A549 (cell line): ENCODE measurements at regions of chr18 and their contacts with region 1.

Region 1: DNA sequence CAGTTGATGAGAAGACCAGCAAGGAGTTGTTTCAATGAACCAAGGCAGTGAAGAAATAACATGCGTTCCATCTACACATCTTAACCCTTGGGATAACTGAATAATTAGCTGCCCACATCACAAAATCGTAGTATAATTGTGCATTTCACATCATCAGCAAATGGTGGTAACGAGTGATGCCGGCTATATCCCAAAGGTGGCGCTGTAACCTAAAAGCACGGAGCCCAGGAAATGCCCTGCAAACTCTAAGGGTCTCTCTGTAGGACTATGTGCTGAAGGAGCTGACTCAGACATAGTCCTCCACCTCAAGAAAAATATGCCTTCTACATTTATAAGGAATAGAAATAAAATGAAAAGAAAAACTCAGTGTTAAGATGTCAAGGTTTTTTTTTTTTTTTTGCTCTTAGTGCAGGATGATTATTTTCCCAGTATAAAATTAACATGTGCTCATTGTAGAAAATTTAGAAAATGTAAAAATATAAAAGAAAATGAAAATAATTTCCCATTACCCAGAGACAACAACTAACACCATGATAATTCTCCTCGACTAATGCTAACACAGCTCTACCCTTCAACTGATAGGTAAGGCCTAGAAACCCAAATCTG is 23.1 kb upstream of the DSG3 start:
- DNase-seq: peak; percentile 4 to 42
- ATAC-seq: peak; percentile 68 to 81; a peak in 5 of 6 replicates
- H3K4me3 ChIP-seq: no peak overlapping the region
- H3K27ac ChIP-seq: no peak overlapping the region
- H3K4me1 ChIP-seq: 0 out of 3 replicates have a peak, but pooled peaks cover 1% of the 10 kb centered on the region
- CTCF ChIP-seq: peak; percentile 71
- EP300 ChIP-seq: no peak
- POLR2A ChIP-seq: no peak
- RAD21 ChIP-seq: peak; percentile 81 to 84

Region 2: GRCh38 chr18:31241900-31242409 is 182.5 kb before region 1 on chr18:
- CTCF ChIA-PET with region 1: interaction called, 11 read pairs
- POLR2A ChIA-PET with region 1: no interaction called
- DNase-seq: peak; percentile 69 to 88
- ATAC-seq: peak; percentile 92 to 95
- H3K4me3 ChIP-seq: no peak overlapping the region
- H3K27ac ChIP-seq: peak overlapping the region; percentile 46 to 68
- H3K4me1 ChIP-seq: peaks cover 53% of the 10 kb centered on the region
- CTCF ChIP-seq: peak; percentile 50
- EP300 ChIP-seq: peak in 1 of 2 experiments; percentile 23; a peak in 1 of 5 replicates
- POLR2A ChIP-seq: no peak
- RAD21 ChIP-seq: peak; percentile 37 to 56

Region 3: GRCh38 chr18:31407649-31408048 is 16.8 kb before region 1 on chr18:
- CTCF ChIA-PET with region 1: interaction called, 12 read pairs
- POLR2A ChIA-PET with region 1: no interaction called
- DNase-seq: no peak
- ATAC-seq: no peak
- H3K4me3 ChIP-seq: no peak overlapping the region
- H3K27ac ChIP-seq: no peak overlapping the region
- H3K4me1 ChIP-seq: peaks cover 8% of the 10 kb centered on the region
- CTCF ChIP-seq: no peak
- EP300 ChIP-seq: no peak
- POLR2A ChIP-seq: no peak
- RAD21 ChIP-seq: no peak

Region 4: DNA sequence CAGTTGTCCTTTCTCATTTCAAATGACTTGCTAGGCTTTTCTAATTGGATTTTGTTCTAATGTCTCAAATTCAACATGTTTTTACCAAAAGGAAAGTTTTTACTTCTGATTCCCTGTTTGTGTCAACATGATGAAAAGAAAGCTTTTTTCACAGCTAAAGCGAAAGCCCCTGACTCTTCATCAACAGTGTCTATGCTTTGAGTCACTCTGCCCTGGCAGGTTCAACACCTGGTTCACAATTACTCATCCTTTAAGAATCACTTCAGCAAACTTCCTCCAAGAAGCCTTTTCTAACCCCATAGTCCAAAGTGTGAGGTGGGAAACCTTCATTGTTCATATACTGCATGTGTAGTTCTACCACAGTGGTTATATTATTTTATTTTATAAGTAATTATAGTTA is 65.9 kb after region 1 on chr18:
- CTCF ChIA-PET with region 1: interaction called, 11 read pairs
- POLR2A ChIA-PET with region 1: no interaction called
- DNase-seq: peak in 1 of 2 experiments; percentile 39
- ATAC-seq: no peak
- H3K4me3 ChIP-seq: no peak overlapping the region
- H3K27ac ChIP-seq: peak overlapping the region in 1 of 2 experiments; percentile 49; a peak in 2 of 6 replicates
- H3K4me1 ChIP-seq: peaks cover 49% of the 10 kb centered on the region
- CTCF ChIP-seq: no peak
- EP300 ChIP-seq: no peak
- POLR2A ChIP-seq: no peak
- RAD21 ChIP-seq: no peak

Region 5: DNA sequence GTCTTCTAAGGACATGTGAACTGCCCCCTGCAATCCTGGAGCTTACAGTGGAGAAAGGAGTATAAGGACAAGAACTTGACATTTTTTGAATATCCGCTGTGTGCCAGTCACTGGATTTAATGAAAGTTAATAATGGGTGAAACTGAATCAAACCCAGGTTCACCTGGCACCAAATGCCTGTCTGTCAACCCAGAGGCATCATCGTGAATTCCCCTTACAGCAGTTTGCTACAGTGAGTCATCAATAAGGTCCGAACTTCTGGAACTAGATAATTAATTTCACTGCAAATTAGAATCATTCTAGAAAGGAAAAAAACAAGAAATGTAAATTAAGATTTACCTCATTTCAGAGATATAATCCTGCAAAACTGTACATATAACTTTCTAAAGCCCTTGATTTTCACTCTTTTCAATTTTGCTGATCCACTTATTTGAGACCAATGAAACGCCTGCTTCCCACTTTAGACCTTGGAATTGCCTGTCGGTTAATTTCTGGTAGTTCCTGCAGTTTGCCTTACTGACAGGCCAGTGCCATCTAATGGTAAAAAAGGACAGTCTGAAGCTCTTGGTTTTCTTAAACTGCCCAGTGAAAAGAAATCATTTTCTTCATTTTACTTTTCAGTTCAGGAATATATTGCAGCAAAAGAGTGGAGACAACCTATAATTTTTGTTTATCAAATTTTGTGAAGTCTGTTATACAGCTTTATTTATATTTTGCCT is 81.7 kb after region 1 on chr18:
- CTCF ChIA-PET with region 1: interaction called, 55 read pairs
- POLR2A ChIA-PET with region 1: no interaction called
- DNase-seq: peak; percentile 21 to 63
- ATAC-seq: peak; percentile 64 to 69; a peak in 4 of 6 replicates
- H3K4me3 ChIP-seq: no peak overlapping the region
- H3K27ac ChIP-seq: no peak overlapping the region
- H3K4me1 ChIP-seq: peaks cover 28% of the 10 kb centered on the region
- CTCF ChIP-seq: peak; percentile 48
- EP300 ChIP-seq: no peak
- POLR2A ChIP-seq: no peak
- RAD21 ChIP-seq: peak; percentile 64 to 67

Region 6: DNA sequence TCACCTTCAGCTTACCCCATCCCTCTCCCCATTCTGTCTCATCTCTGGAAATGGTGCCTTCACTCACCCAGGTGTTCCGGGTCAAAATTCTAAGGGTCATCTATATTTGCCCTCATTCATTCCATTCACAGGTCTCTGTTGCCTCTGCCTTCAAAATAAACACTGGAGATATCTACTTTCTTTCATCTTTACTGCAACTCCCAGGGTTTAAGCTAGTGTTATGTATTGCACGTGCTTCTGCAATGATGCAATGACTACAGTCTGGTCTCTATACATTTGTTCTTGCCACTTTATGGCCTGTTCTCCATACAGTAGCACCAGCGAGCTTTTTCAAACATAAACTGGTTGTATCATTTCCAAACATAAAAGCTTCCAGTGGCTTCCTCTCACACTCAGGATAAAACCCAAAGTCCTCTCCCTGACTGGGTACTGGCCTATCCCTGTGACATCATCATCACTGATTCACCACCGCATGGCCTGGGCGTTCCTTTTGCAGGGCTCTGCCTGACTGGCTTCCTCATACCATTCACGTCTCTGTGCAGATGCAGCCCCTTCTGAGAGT is 87.8 kb after region 1 on chr18:
- CTCF ChIA-PET with region 1: interaction called, 55 read pairs
- POLR2A ChIA-PET with region 1: no interaction called
- DNase-seq: peak; percentile 58 to 85
- ATAC-seq: peak; percentile 98 to 99
- H3K4me3 ChIP-seq: no peak overlapping the region
- H3K27ac ChIP-seq: peak overlapping the region; percentile 71 to 90
- H3K4me1 ChIP-seq: peaks cover 60% of the 10 kb centered on the region
- CTCF ChIP-seq: no peak
- EP300 ChIP-seq: no peak
- POLR2A ChIP-seq: no peak
- RAD21 ChIP-seq: no peak

Region 7: GRCh38 chr18:31555971-31556747 is 131.7 kb after region 1 on chr18:
- CTCF ChIA-PET with region 1: interaction called, 14 read pairs
- POLR2A ChIA-PET with region 1: no interaction called
- DNase-seq: peak; percentile 25 to 58
- ATAC-seq: peak; percentile 75 to 86; a peak in 5 of 6 replicates
- H3K4me3 ChIP-seq: no peak overlapping the region
- H3K27ac ChIP-seq: no peak overlapping the region
- H3K4me1 ChIP-seq: no peaks in the 10 kb centered on the region
- CTCF ChIP-seq: peak; percentile 73
- EP300 ChIP-seq: no peak
- POLR2A ChIP-seq: no peak
- RAD21 ChIP-seq: peak; percentile 81